ENCODE measurements at regions of chr11 and their contacts with region 1.

Region 1: DNA sequence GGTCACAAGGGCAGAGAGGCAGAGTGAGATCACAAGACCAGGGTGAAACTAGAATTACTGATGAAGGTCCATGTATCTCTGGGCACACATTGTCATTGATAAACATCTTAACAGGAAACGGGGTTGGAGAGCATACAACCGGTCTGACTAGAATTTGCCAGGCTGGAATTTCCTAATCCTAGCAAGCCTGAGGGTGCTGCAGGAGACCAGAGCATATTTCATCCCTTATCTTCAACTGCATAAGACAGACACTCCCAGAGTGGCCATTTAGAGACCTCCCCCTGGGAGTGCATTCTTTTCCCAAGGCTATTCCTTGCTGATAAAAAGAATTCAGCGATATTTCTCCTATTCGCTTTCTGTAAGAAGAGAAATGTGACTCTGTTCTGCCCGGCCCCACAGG is 84.6 kb upstream of the IZUMO1R start:
- DNase-seq: no peak
- H3K4me3 ChIP-seq: no peak overlapping the region
- H3K27ac ChIP-seq: no peak overlapping the region
- H3K4me1 ChIP-seq: no peaks in the 10 kb centered on the region
- H3K27me3 ChIP-seq: peaks cover 0 to 1% (median 0%) of the 10 kb centered on the region in 4 experiments; a peak in 1 of 7 replicates
- CTCF ChIP-seq: no peak
- EP300 ChIP-seq: peak in 1 of 2 experiments; percentile 87; a peak in 1 of 3 replicates
- POLR2A ChIP-seq: no peak
- RAD21 ChIP-seq: no peak

Region 2: GRCh38 chr11:94243571-94244515 is 24.1 kb after region 1 on chr11:
- CTCF ChIA-PET with region 1: interaction called, 22 read pairs
- POLR2A ChIA-PET with region 1: no interaction called
- DNase-seq: no peak
- H3K4me3 ChIP-seq: no peak overlapping the region
- H3K27ac ChIP-seq: no peak overlapping the region
- H3K4me1 ChIP-seq: no peaks in the 10 kb centered on the region
- H3K27me3 ChIP-seq: no peaks in the 10 kb centered on the region
- CTCF ChIP-seq: no peak
- EP300 ChIP-seq: no peak
- POLR2A ChIP-seq: no peak
- RAD21 ChIP-seq: no peak

Measured in H1 (cell line).